HepG2 (cell line): ENCODE measurements at regions of chr2 and their contacts with region 1.

Region 1: GRCh38 chr2:85445316-85446295 is 27.1 kb downstream of the SH2D6 start:
- DNase-seq: no peak
- ATAC-seq: peak; percentile 46
- H3K4me3 ChIP-seq: no peak overlapping the region
- H3K27ac ChIP-seq: no peak overlapping the region
- H3K4me1 ChIP-seq: peaks cover 32% of the 10 kb centered on the region
- H3K27me3 ChIP-seq: peaks cover 0 to 10% of the 10 kb centered on the region in 2 experiments; a peak in 1 of 5 replicates
- CTCF ChIP-seq: no peak
- EP300 ChIP-seq: no peak
- POLR2A ChIP-seq: no peak
- RAD21 ChIP-seq: no peak

Region 2: DNA sequence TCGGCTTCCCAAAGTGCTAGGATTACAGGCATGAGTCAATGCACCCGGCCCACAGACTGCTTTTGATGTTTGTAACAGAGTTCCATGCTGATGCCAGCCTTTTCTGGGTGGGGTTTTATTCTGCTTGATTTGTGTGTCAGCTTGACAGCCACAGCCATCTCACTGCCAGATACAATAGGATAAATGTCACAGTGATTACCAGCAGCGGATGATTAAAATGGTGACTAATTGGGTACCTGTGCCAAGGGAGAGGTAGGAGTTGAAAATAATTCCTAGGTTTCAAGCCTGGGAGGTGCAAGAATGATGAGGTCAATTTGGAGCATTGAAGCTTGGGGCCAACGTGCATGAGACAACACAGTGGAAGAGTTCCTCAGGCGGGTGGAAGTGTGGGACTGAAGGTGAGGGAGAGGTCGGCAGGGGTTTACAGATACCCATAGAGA is 12.3 kb after region 1 on chr2:
- CTCF ChIA-PET with region 1: no interaction called
- POLR2A ChIA-PET with region 1: interaction called, 11 read pairs
- in situ Hi-C with region 1: no loop called
- intact Hi-C with region 1: no loop called
- DNase-seq: no peak
- ATAC-seq: no peak
- H3K4me3 ChIP-seq: no peak overlapping the region
- H3K27ac ChIP-seq: no peak overlapping the region
- H3K4me1 ChIP-seq: peaks cover 52% of the 10 kb centered on the region
- H3K27me3 ChIP-seq: peaks cover 3 to 20% of the 10 kb centered on the region in 2 experiments; a peak in 4 of 5 replicates
- CTCF ChIP-seq: no peak
- EP300 ChIP-seq: no peak
- POLR2A ChIP-seq: no peak
- RAD21 ChIP-seq: no peak